HepG2 (cell line): ENCODE measurements at regions of chr6 and their contacts with region 1.

Region 1: DNA sequence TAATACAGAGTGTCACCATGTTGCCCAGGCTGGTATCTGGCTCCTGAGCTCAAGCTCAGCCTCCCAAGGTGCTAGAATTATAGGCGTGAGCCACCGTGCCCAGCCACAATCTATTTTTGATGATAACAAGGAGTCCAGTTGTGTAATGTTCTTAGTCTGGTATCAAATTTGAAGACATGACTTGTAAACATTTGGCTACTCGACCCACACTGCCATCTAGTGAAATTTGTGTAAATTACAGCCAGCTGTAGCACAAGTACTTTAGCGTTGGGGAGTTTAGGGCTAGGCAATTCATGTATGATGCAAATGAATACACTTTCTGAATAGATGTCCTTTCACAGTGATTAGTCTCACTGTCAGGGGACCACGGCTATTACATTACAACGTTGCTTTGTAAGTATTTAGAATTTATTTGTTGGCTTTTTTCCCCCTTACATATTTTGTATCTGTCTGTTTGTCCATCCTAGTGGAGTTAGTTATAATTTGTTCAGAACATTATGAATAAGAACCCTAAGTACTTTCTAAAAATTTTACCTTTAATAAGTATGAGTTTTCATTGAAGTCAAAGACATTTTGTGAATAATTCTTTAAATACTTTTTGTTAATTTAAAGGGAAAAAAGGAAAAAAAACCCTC is 139.7 kb downstream of the PRDM13 start:
- DNase-seq: peak; percentile 48
- ATAC-seq: peak; percentile 77
- H3K4me3 ChIP-seq: no peak overlapping the region
- H3K27ac ChIP-seq: no peak overlapping the region
- H3K4me1 ChIP-seq: no peaks in the 10 kb centered on the region
- H3K27me3 ChIP-seq: no peaks in the 10 kb centered on the region
- CTCF ChIP-seq: peak; percentile 81
- EP300 ChIP-seq: no peak
- POLR2A ChIP-seq: no peak
- RAD21 ChIP-seq: peak; percentile 52

Region 2: GRCh38 chr6:99151634-99152344 is 594.6 kb before region 1 on chr6:
- CTCF ChIA-PET with region 1: no interaction called
- POLR2A ChIA-PET with region 1: no interaction called
- in situ Hi-C with region 1: no loop called
- intact Hi-C with region 1: no loop called
- DNase-seq: peak; percentile 23
- ATAC-seq: peak; percentile 98
- H3K4me3 ChIP-seq: no peak overlapping the region
- H3K27ac ChIP-seq: no peak overlapping the region
- H3K4me1 ChIP-seq: no peaks in the 10 kb centered on the region
- H3K27me3 ChIP-seq: no peaks in the 10 kb centered on the region
- CTCF ChIP-seq: peak; percentile 73
- EP300 ChIP-seq: no peak
- POLR2A ChIP-seq: no peak
- RAD21 ChIP-seq: no peak

Region 3: DNA sequence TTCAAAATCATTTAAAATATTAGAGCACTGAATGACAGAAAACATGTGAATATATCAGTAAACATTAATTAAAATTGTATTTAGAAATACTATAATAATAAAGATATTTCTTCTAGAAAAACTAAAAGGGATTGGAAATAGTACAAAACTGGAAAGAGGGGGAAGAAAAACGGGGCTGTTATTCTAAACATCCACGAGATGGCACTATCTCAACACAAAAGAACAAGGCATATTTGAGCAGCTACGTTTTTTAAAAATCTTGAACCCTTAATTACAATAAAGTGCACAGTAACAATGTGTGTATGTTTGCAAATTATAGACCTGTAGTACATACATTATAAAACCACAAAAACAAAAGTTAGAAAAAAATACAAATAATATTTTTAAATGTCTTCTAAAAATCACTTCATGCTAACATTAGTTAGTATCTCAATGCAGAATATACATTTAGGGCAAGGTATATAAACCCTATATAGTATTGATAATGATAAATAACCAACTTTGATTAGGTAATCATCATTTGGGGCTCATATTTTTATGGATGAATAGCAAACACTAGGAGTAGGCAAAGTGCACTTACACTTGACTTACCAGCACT is 278.8 kb before region 1 on chr6:
- CTCF ChIA-PET with region 1: interaction called, 26 read pairs
- POLR2A ChIA-PET with region 1: no interaction called
- in situ Hi-C with region 1: loop called (anchors 10 kb)
- intact Hi-C with region 1: loop called (anchors 1 kb)
- DNase-seq: peak; percentile 18
- ATAC-seq: no peak
- H3K4me3 ChIP-seq: no peak overlapping the region
- H3K27ac ChIP-seq: no peak overlapping the region
- H3K4me1 ChIP-seq: no peaks in the 10 kb centered on the region
- H3K27me3 ChIP-seq: no peaks in the 10 kb centered on the region
- CTCF ChIP-seq: peak; percentile 58
- EP300 ChIP-seq: no peak
- POLR2A ChIP-seq: no peak
- RAD21 ChIP-seq: no peak

Region 4: GRCh38 chr6:99520855-99521632 is 225.3 kb before region 1 on chr6:
- CTCF ChIA-PET with region 1: no interaction called
- POLR2A ChIA-PET with region 1: no interaction called
- in situ Hi-C with region 1: no loop called
- intact Hi-C with region 1: loop called (anchors 2 kb)
- DNase-seq: peak; percentile 74
- ATAC-seq: peak; percentile 98
- H3K4me3 ChIP-seq: peak overlapping the region; percentile 92 to 99 (median 94)
- H3K27ac ChIP-seq: peak overlapping the region; percentile 94
- H3K4me1 ChIP-seq: peaks cover 24% of the 10 kb centered on the region
- H3K27me3 ChIP-seq: no peaks in the 10 kb centered on the region; a peak in 1 of 5 replicates
- CTCF ChIP-seq: peak; percentile 68
- EP300 ChIP-seq: no peak
- POLR2A ChIP-seq: peak; percentile 93 to 95
- RAD21 ChIP-seq: 0 out of 2 replicates have a peak, but pooled peaks have one; percentile 9

Region 5: DNA sequence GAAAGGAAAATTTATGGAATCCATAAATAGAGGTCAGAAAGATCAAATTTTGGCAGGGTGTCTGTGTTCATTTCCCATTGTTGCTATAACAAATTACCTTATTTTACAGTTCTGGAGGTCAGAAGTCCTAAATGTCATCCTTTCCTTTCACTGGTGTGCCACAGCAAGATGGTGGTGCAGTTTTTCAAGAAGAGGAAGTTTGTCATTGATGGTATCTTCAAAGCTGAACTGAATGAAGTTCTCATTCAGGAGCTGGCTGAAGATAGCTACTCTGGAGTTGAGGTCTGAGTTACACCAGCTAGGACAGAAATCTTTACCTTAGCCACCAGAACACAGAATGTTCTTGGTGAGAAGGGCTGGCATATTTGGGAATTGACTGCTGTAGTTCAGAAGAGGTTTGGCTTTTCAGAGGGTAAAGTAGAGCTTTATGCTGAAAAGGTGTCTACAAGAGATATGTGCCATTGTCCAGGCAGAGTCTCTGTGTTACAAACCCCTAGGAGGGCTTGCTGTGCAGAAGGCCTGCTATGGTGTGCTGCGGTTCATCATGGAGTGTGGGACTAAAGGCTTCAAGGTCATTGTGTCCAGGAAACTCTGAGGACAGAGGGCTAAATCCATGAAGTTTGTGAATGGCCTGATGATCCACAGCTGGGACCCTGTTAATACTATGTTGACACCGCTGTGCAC is 170.7 kb before region 1 on chr6:
- CTCF ChIA-PET with region 1: no interaction called
- POLR2A ChIA-PET with region 1: no interaction called
- in situ Hi-C with region 1: loop called (anchors 5 kb)
- intact Hi-C with region 1: no loop called
- DNase-seq: no peak
- ATAC-seq: no peak
- H3K4me3 ChIP-seq: no peak overlapping the region
- H3K27ac ChIP-seq: no peak overlapping the region
- H3K4me1 ChIP-seq: no peaks in the 10 kb centered on the region
- H3K27me3 ChIP-seq: no peaks in the 10 kb centered on the region; a peak in 1 of 5 replicates
- CTCF ChIP-seq: no peak
- EP300 ChIP-seq: no peak
- POLR2A ChIP-seq: no peak
- RAD21 ChIP-seq: no peak

Region 6: DNA sequence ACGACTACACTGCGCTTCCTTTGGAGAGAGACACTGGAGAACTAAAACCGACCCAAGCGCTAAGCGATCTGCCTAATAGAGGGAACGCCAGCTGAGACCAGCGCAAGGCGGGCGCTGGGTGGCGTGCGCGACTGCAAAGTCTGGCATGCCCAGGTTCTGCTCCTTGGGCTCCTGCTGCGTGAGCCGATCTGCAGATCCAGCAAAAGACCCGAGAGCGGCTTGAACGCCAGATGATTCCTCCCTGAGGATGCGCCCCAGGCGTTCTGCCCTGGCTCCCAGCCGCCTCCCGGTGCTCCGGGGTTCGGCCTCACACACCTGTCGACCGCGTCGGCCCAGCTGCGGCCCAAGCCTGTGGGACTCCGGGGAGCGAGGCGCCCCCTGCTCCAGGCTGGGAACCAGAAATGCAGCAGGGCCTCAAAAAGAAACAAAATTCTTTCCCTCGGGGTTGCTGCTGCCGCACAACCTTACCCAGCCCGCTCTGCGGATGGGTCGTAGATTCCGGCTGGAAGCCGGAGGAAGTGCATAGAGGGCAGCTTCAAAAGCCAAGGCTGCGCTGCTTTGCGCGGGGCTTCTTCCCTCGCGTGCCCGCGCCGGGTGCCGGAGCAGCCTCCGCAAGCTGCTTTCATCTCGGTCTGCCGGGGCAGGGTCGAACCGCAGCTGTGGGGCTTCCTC is 157.6 kb before region 1 on chr6:
- CTCF ChIA-PET with region 1: interaction called, 10 read pairs
- POLR2A ChIA-PET with region 1: no interaction called
- in situ Hi-C with region 1: no loop called
- intact Hi-C with region 1: loop called (anchors 1 kb)
- DNase-seq: peak; percentile 59
- ATAC-seq: peak; percentile 99
- H3K4me3 ChIP-seq: peak overlapping the region; percentile 51 to 79 (median 57)
- H3K27ac ChIP-seq: no peak overlapping the region
- H3K4me1 ChIP-seq: peaks cover 13% of the 10 kb centered on the region
- H3K27me3 ChIP-seq: peaks cover 5 to 47% of the 10 kb centered on the region in 2 experiments
- CTCF ChIP-seq: peak; percentile 88
- EP300 ChIP-seq: no peak
- POLR2A ChIP-seq: no peak
- RAD21 ChIP-seq: peak; percentile 84

Region 7: DNA sequence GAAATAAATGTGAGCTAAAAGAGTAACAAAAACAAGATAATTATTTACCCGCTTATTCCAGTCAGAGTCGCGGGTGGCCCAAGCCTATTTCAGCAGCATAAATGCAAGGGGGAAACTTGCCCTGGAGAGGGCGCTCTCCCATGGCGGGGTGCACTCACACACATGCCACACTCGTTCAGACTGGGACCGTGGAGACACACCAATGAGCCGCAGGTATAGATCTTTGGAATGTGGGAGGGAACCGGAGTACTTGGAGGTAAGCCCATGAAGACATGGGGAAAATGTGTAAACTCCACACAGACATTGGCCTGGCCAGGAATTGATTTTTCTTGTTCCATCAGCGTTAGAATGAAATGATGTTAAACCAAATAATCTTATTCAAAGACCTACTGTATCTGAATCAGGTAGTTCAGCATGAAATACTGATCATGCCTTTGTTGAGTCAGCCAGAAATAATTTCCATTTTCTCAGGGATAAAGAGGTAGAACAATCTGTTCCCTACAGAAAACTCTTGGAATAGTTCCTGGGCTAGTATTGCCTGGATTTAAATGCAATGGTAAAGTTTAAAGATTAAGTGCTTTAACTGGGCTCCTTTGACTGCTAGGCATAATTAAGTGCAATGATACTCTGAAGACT is 56.1 kb after region 1 on chr6:
- CTCF ChIA-PET with region 1: no interaction called
- POLR2A ChIA-PET with region 1: no interaction called
- in situ Hi-C with region 1: no loop called
- intact Hi-C with region 1: no loop called
- DNase-seq: no peak
- ATAC-seq: no peak
- H3K4me3 ChIP-seq: no peak overlapping the region
- H3K27ac ChIP-seq: no peak overlapping the region
- H3K4me1 ChIP-seq: no peaks in the 10 kb centered on the region
- H3K27me3 ChIP-seq: no peaks in the 10 kb centered on the region; a peak in 1 of 5 replicates
- CTCF ChIP-seq: no peak
- EP300 ChIP-seq: no peak
- POLR2A ChIP-seq: no peak
- RAD21 ChIP-seq: no peak

Region 8: DNA sequence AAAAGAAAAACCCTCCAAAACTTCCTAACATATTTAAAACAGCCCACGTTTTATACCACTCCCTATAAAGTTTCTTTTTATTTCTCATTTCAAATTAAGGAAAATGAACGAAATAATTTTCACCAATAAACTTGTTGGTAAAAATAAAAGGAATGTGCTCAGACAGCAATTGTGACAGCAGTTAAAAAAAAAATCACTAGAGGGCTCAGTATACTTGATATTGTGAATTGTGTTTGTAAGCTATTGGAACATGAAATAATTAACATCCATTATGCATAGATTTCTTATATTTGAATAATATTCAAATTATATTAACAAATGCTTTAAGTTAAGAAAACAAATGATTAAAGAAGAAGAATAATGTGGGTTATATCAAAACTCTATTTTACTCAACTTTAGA is 1029.3 kb after region 1 on chr6:
- CTCF ChIA-PET with region 1: no interaction called
- POLR2A ChIA-PET with region 1: no interaction called
- in situ Hi-C with region 1: no loop called
- intact Hi-C with region 1: no loop called
- DNase-seq: no peak
- ATAC-seq: no peak
- H3K4me3 ChIP-seq: no peak overlapping the region
- H3K27ac ChIP-seq: no peak overlapping the region
- H3K4me1 ChIP-seq: no peaks in the 10 kb centered on the region
- H3K27me3 ChIP-seq: no peaks in the 10 kb centered on the region
- CTCF ChIP-seq: no peak
- EP300 ChIP-seq: no peak
- POLR2A ChIP-seq: no peak
- RAD21 ChIP-seq: no peak